ENCODE measurements at regions of chr14 and their contacts with region 1.

Region 1: DNA sequence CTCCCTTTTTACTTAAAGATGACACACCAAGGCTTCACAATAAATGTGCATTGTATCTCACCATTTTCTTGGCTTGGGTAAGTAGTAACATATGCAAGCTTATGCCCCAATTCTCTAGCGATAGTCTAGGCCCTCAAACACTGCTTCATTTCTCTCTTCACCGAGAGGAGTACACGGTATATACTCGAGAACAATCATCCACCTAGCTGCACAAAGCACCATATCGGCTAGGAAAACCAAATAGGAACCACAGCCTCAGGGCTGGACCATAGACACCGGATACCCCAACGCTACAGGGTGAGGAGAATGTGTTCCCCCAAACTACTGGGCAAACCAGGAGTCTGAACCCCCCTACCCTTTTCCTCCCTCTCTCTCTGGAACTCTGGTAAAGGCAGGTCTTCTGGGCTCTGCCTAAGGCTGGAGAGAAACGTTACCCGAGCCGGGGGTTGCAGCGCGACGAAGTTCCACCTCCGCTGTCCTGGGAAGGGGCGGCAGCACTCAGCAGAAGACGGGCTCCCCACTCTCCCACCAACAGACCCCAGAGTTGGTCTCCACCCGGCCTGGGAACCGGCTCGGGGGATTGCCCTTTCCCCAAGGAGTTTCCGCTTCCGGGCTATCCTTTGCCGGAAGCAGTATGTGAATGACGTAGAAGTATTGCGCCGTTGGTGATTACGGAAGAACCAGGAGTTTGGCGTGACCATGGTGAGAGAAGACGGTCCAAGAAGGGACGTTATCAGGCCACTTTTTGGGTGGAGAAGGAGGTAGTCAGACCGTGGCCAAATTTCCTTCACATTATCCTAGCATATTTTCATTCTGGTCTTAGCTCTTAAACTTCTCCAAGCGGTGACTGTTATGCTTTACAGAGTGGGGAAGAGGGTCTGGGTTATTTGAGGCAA is at the starts of genes AREL1 and FCF1:
- DNase-seq: peak; percentile 87
- H3K4me3 ChIP-seq: peak within 1 kb of the TSS; percentile 89 to 97 (median 94)
- H3K27ac ChIP-seq: peak within 1 kb of the TSS; percentile 85
- H3K4me1 ChIP-seq: peaks cover 21% of the 10 kb centered on the region
- H3K27me3 ChIP-seq: no peaks in the 10 kb centered on the region
- CTCF ChIP-seq: no peak
- total RNA-seq, gene AREL1: 39.3 to 51.8 TPM
- total RNA-seq, gene FCF1: 39.2 to 57.1 TPM

Region 2: GRCh38 chr14:74525361-74525851 is 187.3 kb before region 1 on chr14:
- CTCF ChIA-PET with region 1: no interaction called
- dilution Hi-C with region 1: no loop called
- in situ Hi-C with region 1: no loop called
- intact Hi-C with region 1: no loop called
- DNase-seq: no peak
- H3K4me3 ChIP-seq: no peak overlapping the region
- H3K27ac ChIP-seq: no peak overlapping the region
- H3K4me1 ChIP-seq: peaks cover 19% of the 10 kb centered on the region
- H3K27me3 ChIP-seq: no peaks in the 10 kb centered on the region
- CTCF ChIP-seq: no peak

Region 3: DNA sequence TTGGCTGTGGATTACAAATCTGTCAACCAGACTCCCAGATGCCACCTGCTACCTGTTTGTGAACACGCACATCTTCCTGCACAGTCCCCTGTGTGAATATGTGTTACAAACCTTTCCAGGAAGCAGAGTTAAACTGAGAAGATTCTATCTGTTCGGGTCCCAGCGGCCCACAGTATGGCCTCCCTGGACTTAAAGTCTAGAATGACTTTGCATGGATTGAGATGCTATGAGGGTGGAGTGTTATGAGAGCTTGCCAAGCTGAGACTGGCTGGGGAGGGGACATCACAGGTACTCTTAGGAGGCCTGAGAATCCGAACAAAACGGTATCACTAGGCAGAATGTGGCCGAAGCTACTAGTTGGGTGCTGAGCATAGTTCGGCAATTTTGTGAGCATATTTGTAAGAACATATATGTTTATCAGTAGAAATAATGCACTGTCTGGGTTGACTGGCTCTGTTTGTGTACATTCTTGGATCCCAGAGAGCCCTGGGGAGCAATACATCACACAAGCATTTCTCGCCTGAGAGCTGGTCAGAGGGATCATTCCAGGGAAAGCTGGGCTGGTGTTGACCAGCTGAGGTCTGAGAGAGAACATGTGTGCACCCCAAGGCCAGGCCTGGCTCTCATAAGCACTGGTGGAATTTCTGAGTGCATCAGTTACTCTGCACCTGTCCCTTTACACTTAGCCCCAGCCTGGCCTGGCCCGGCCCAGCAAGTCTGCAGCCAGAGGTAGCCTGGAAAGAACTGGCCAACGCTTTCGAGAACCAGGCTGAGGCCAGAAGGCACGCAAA is 71.0 kb before region 1 on chr14:
- CTCF ChIA-PET with region 1: no interaction called
- dilution Hi-C with region 1: loop called (anchors 5 kb)
- in situ Hi-C with region 1: no loop called
- intact Hi-C with region 1: no loop called
- DNase-seq: no peak
- H3K4me3 ChIP-seq: no peak overlapping the region
- H3K27ac ChIP-seq: no peak overlapping the region
- H3K4me1 ChIP-seq: peaks cover 24% of the 10 kb centered on the region
- H3K27me3 ChIP-seq: no peaks in the 10 kb centered on the region
- CTCF ChIP-seq: no peak

Region 4: DNA sequence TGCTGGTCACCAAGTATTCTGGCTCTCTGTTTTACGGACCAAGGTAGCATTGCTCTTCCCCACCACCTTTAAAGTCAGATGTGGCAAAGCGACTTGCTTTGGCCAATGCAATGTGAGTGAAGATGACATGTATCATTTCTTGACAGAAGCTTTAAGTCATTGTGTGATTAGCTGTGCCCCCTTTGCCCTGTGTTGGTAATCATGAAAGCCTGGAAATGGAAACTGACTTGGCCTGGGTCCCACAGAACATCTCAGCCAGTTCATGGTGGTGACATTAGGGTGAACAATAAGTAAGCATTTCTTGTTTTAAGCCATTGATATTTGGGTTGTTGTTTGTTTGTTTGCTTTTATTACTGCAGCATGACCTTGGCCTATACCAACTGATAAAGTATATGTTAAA is 34.5 kb after region 1 on chr14:
- CTCF ChIA-PET with region 1: no interaction called
- dilution Hi-C with region 1: loop called (anchors 5 kb)
- in situ Hi-C with region 1: no loop called
- intact Hi-C with region 1: no loop called
- DNase-seq: no peak
- H3K4me3 ChIP-seq: no peak overlapping the region
- H3K27ac ChIP-seq: no peak overlapping the region
- H3K4me1 ChIP-seq: no peaks in the 10 kb centered on the region
- H3K27me3 ChIP-seq: no peaks in the 10 kb centered on the region
- CTCF ChIP-seq: no peak

Region 5: GRCh38 chr14:74762917-74763802 is 50.4 kb after region 1 on chr14 and contains the start of gene YLPM1:
- CTCF ChIA-PET with region 1: no interaction called
- dilution Hi-C with region 1: no loop called
- in situ Hi-C with region 1: no loop called
- intact Hi-C with region 1: loop called (anchors 5 kb)
- DNase-seq: peak; percentile 96
- H3K4me3 ChIP-seq: peak within 1 kb of the TSS; percentile 68 to 92 (median 86)
- H3K27ac ChIP-seq: peak within 1 kb of the TSS; percentile 90
- H3K4me1 ChIP-seq: peaks cover 10% of the 10 kb centered on the region
- H3K27me3 ChIP-seq: no peaks in the 10 kb centered on the region
- CTCF ChIP-seq: peak; percentile 53 to 55
- total RNA-seq, gene YLPM1: 38.7 to 52.4 TPM

Region 6: DNA sequence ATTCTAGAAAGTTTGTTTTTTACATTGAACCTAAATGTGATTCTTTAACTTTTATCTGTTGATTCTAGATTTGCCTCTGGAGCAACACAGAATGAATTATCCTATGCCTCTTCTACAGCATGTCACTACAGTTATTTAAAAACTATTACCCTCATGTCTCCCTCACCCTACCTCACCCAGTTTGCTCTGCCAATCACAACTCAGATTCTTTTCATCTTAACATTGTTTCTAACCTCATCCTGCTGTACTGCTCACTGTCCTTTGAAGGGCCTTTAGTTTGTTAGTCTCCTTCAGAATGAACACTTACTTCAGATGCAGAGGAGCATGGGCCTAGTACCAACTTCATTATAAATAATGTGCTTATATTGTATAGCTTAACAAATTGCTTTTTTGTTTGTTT is 71.9 kb after region 1 on chr14:
- CTCF ChIA-PET with region 1: no interaction called
- dilution Hi-C with region 1: no loop called
- in situ Hi-C with region 1: no loop called
- intact Hi-C with region 1: no loop called
- DNase-seq: no peak
- H3K4me3 ChIP-seq: no peak overlapping the region
- H3K27ac ChIP-seq: no peak overlapping the region
- H3K4me1 ChIP-seq: no peaks in the 10 kb centered on the region
- H3K27me3 ChIP-seq: no peaks in the 10 kb centered on the region
- CTCF ChIP-seq: no peak

Region 7: DNA sequence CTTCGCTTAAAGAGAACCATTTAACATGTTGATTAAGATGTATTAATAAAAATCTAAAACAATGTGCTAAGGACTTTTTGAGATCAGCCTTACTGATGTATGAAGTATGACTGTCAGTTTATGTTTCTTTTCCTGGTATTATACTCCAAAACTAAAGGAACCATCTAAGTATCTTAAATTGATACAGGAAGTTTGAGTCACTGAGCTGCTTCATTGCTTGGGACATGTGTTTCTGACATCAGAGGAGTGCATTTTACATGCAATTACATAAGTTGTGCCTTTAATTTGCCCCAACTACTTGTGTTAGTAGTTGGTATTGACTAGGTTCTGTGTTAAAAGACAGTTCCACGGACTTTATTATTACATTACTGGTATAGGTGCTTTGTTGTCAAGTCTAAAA is 112.2 kb after region 1 on chr14:
- CTCF ChIA-PET with region 1: no interaction called
- dilution Hi-C with region 1: no loop called
- in situ Hi-C with region 1: no loop called
- intact Hi-C with region 1: no loop called
- DNase-seq: peak; percentile 24
- H3K4me3 ChIP-seq: no peak overlapping the region
- H3K27ac ChIP-seq: no peak overlapping the region
- H3K4me1 ChIP-seq: peaks cover 4% of the 10 kb centered on the region
- H3K27me3 ChIP-seq: no peaks in the 10 kb centered on the region
- CTCF ChIP-seq: no peak